Caco-2 (cell line): ENCODE measurements at regions of chr19 and their contacts with region 1.

Region 1: DNA sequence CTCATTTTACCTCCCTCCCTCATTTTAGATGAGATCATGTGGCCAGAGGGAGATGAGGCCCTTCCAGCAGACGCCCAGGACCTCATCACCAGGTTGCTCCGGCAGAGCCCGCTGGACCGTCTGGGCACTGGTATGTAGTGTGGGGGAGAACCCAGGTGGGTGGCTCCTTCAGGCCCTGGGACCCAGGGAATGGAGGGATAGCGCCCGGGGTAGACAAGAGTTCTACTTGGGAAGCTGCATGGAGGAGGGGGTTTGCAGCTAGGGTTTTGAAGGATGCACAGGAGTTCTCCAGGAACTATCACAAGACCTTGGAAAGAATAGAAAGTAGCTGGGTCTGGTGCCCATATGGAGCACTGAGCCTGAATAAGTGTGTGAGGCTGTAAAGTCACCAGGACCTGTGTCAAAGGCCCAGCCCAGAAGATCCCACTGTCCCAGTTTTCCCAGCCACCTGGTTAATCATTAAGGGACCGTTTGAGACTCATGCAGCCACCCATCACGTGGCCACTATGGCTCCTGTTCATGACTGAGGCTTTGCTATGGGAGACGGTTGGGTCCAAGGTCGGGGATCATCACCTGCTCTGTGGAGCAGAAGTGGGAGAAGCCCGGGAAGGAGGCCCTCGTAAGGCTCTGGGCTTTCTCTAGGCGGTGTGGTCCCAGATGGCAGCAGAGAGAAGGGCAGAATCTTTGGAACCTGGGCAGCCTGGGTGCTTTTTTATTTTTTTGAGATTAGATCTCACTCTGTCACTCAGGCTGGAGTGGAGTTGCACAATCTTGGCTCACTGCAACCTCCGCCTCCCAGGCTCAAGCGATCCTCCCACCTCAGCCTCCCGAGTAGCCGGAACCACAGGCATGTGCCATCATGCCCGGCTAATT is 17.0 kb upstream of the PIK3R2 start:
- DNase-seq: peak; percentile 73 to 84
- H3K4me3 ChIP-seq: no peak overlapping the region
- H3K4me3 Mint-ChIP-seq: no peak overlapping the region
- H3K27ac Mint-ChIP-seq: peak overlapping the region; percentile 90
- H3K4me1 ChIP-seq: peaks cover 6% of the 10 kb centered on the region
- H3K4me1 Mint-ChIP-seq: peaks cover 13% of the 10 kb centered on the region
- H3K27me3 ChIP-seq: no peaks in the 10 kb centered on the region
- H3K27me3 Mint-ChIP-seq: no peaks in the 10 kb centered on the region
- CTCF ChIP-seq: no peak

Region 2: GRCh38 chr19:18097217-18097992 is 38.5 kb before region 1 on chr19 and contains the start of gene MAST3:
- CTCF ChIA-PET with region 1: no interaction called
- POLR2A ChIA-PET with region 1: no interaction called
- intact Hi-C with region 1: no loop called
- DNase-seq: peak; percentile 89 to 94
- H3K4me3 ChIP-seq: peak within 1 kb of the TSS; percentile 51
- H3K4me3 Mint-ChIP-seq: peak within 1 kb of the TSS; percentile 67
- H3K27ac Mint-ChIP-seq: no peak within 1 kb of the TSS
- H3K4me1 ChIP-seq: peaks cover 9% of the 10 kb centered on the region; the same call in 1 of the 2 replicates
- H3K4me1 Mint-ChIP-seq: no peaks in the 10 kb centered on the region
- H3K27me3 ChIP-seq: no peaks in the 10 kb centered on the region
- H3K27me3 Mint-ChIP-seq: no peaks in the 10 kb centered on the region
- CTCF ChIP-seq: no peak
- total RNA-seq, gene MAST3: 8.0 and 8.2 TPM in 2 replicates

Region 3: GRCh38 chr19:18152444-18152816 is 16.5 kb after region 1 on chr19:
- CTCF ChIA-PET with region 1: no interaction called
- POLR2A ChIA-PET with region 1: no interaction called
- intact Hi-C with region 1: loop called (anchors 2 kb)
- DNase-seq: peak; percentile 95 to 97
- H3K4me3 ChIP-seq: peak overlapping the region; percentile 49
- H3K4me3 Mint-ChIP-seq: peak overlapping the region; percentile 94
- H3K27ac Mint-ChIP-seq: peak overlapping the region; percentile 98
- H3K4me1 ChIP-seq: peaks cover 11% of the 10 kb centered on the region
- H3K4me1 Mint-ChIP-seq: peaks cover 10% of the 10 kb centered on the region
- H3K27me3 ChIP-seq: no peaks in the 10 kb centered on the region
- H3K27me3 Mint-ChIP-seq: no peaks in the 10 kb centered on the region
- CTCF ChIP-seq: peak; percentile 50 to 66

Region 4: DNA sequence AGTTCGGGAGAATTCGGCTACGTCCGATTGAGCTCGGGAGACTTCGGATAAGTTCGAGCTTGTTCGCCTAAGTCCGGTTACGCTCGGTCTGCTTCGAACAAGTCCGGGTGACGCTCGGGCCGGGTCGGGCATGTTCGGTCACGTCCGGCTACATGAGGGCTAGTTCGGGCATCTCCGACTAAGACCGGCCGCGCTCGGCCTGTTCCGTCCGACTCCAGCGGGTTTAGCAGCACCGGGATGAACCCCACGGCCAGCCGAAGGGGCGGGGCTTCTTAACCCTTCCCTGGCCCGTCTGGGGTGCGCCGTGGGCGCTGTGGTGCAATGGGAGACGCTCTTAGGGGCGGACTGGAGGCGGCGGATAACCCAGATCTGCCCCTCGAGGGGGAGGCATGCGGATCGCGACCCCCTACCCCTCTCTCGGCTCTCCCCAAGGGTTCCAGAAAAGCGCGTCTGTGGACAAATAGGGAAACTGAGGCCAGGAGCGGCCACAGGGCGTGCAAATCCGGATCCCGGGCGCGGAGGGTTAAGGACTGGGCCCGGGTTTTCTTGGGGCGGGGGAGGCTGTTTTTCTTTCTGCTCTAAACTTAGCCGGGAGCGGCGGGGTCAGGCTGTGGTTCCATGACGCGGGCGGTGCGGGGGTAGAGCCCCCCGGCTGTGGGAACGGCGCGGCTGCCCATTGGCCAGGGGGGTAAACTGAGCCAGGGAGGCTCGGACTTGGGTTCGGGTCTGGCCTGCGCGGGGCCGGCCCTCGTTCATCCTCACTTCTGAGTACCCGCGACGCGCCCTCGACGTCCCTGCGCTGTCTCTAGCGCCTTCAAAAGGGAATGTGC is 88.8 kb after region 1 on chr19:
- CTCF ChIA-PET with region 1: no interaction called
- POLR2A ChIA-PET with region 1: no interaction called
- intact Hi-C with region 1: no loop called
- DNase-seq: peak; percentile 97 to 98
- H3K4me3 ChIP-seq: peak overlapping the region; percentile 79
- H3K4me3 Mint-ChIP-seq: peak overlapping the region; percentile 95
- H3K27ac Mint-ChIP-seq: peak overlapping the region; percentile 81
- H3K4me1 ChIP-seq: 0 out of 2 replicates have a peak, but pooled peaks cover 5% of the 10 kb centered on the region
- H3K4me1 Mint-ChIP-seq: peaks cover 10% of the 10 kb centered on the region
- H3K27me3 ChIP-seq: no peaks in the 10 kb centered on the region
- H3K27me3 Mint-ChIP-seq: no peaks in the 10 kb centered on the region
- CTCF ChIP-seq: no peak